ENCODE measurements at regions of chr18 and their contacts with region 1.

Region 1: GRCh38 chr18:23503038-23503962 is at the start of gene RMC1:
- DNase-seq: peak; percentile 97
- ATAC-seq: peak; percentile 88
- H3K4me3 Mint-ChIP-seq: peak within 1 kb of the TSS; percentile 89
- H3K27ac Mint-ChIP-seq: peak within 1 kb of the TSS; percentile 84
- H3K4me1 Mint-ChIP-seq: peaks cover 44% of the 10 kb centered on the region
- H3K27me3 Mint-ChIP-seq: no peaks in the 10 kb centered on the region
- total RNA-seq, gene RMC1: 48.7 to 51.7 TPM

Region 2: DNA sequence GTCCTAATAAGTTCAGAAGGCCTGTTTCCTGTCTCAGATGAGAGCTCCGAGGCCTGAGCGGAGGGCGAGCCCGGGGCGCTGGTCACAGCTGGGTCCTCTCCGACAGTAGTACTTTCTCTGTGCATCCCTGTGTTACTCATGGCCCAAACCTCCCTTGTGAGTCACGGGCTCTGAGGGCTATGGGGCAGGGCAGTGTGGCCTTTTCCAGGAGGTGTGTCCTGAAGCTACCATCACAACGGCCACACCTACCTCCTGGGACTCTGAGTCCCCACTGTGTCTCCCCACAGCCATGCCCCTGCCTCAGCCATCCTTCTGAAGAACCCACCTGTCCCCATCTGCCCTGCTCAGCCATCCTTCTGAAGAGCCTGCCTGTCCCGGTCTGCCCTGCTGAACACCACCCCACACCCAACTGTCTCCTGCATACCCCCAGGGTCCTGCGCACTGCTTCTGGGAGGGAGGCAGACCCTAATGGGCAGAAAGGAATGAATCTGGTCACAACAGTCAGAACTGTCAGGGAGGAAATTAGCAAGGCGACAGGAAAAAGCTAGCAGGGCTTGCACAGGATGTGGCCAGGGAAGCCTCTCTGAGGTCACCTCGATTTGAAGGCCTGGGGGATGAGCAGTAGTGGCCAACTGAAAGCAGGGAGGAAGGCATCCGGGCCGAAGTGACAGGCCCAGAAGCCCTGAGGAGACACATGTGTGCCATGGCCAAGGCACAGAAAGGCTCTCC is 195.6 kb before region 1 on chr18:
- CTCF ChIA-PET with region 1: no interaction called
- DNase-seq: peak; percentile 89
- ATAC-seq: peak; percentile 68
- H3K4me3 Mint-ChIP-seq: peak overlapping the region; percentile 66
- H3K27ac Mint-ChIP-seq: peak overlapping the region; percentile 98
- H3K4me1 Mint-ChIP-seq: peaks cover 41% of the 10 kb centered on the region
- H3K27me3 Mint-ChIP-seq: no peaks in the 10 kb centered on the region

Region 3: GRCh38 chr18:23471486-23471885 is 31.8 kb before region 1 on chr18:
- CTCF ChIA-PET with region 1: interaction called, 14 read pairs
- DNase-seq: no peak
- ATAC-seq: no peak
- H3K4me3 Mint-ChIP-seq: no peak overlapping the region
- H3K27ac Mint-ChIP-seq: no peak overlapping the region
- H3K4me1 Mint-ChIP-seq: no peaks in the 10 kb centered on the region
- H3K27me3 Mint-ChIP-seq: no peaks in the 10 kb centered on the region

Region 4: DNA sequence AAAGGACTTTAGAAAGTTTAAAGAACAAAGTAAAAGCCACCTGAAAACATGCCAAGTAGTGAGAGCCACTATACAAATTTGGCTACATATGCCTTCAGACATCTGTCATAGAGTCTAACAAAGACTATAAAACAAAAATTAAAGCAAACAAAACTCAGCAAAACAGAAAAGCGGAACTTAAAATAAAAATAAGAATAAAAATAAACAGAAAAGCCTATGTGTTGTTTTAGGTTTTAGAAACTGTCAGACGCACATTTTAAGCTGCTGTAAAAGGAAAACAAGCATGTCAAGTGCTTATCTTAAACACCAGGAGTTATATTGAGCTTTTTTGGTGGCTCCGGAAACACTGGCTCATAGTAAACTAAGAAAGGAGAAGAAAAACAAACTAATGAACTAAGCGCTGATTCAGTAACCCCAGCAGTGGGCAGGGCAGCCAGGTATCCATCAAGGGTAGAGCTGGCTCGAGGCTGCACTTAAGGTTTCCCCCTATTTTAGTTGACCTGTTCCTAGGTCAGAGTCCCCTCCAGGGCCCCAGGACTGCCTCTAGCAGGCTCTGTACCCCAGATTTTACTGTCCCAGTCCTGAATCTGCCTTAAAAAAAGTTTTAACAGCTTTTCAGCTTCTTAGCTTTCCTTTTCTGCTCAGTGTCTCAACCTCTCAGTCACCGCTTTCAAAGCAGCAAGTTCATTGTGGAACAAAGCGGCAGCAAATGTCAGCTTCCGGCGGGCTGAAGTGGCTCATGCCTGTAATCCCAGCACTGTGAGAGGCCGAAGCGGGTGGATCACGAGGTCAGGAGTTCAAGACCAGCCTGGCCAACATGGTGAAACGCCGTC is 15.3 kb before region 1 on chr18:
- CTCF ChIA-PET with region 1: interaction called, 48 read pairs
- DNase-seq: peak; percentile 59
- ATAC-seq: peak; percentile 81
- H3K4me3 Mint-ChIP-seq: peak overlapping the region; percentile 28
- H3K27ac Mint-ChIP-seq: peak overlapping the region; percentile 76
- H3K4me1 Mint-ChIP-seq: peaks cover 13% of the 10 kb centered on the region
- H3K27me3 Mint-ChIP-seq: no peaks in the 10 kb centered on the region

Region 5: GRCh38 chr18:23586249-23587196 is 83.2 kb after region 1 on chr18 and contains the start of gene NPC1:
- CTCF ChIA-PET with region 1: interaction called, 13 read pairs
- DNase-seq: peak; percentile 95
- ATAC-seq: peak; percentile 93
- H3K4me3 Mint-ChIP-seq: peak within 1 kb of the TSS; percentile 94
- H3K27ac Mint-ChIP-seq: peak within 1 kb of the TSS; percentile 98
- H3K4me1 Mint-ChIP-seq: peaks cover 38% of the 10 kb centered on the region
- H3K27me3 Mint-ChIP-seq: no peaks in the 10 kb centered on the region
- total RNA-seq, gene NPC1: 36.1 to 37.4 TPM